Left ventricle myocardium inferior (tissue), 1 donor: ENCODE measurements at regions of chr6 and their contacts with region 1.

Region 1: GRCh38 chr6:141552473-141552878 is 580.2 kb upstream of the GJE1 start:
- DNase-seq: no peak
- H3K4me3 ChIP-seq: no peak overlapping the region
- H3K27ac ChIP-seq: peak overlapping the region; percentile 70
- H3K4me1 ChIP-seq: peaks cover 19% of the 10 kb centered on the region
- H3K27me3 ChIP-seq: no peaks in the 10 kb centered on the region
- CTCF ChIP-seq: no peak

Region 2: GRCh38 chr6:141421376-141421775 is 131.1 kb before region 1 on chr6:
- intact Hi-C with region 1: no loop called
- DNase-seq: no peak
- H3K4me3 ChIP-seq: no peak overlapping the region
- H3K27ac ChIP-seq: peak overlapping the region; percentile 41
- H3K4me1 ChIP-seq: peaks cover 4% of the 10 kb centered on the region
- H3K27me3 ChIP-seq: no peaks in the 10 kb centered on the region
- CTCF ChIP-seq: no peak

Region 3: DNA sequence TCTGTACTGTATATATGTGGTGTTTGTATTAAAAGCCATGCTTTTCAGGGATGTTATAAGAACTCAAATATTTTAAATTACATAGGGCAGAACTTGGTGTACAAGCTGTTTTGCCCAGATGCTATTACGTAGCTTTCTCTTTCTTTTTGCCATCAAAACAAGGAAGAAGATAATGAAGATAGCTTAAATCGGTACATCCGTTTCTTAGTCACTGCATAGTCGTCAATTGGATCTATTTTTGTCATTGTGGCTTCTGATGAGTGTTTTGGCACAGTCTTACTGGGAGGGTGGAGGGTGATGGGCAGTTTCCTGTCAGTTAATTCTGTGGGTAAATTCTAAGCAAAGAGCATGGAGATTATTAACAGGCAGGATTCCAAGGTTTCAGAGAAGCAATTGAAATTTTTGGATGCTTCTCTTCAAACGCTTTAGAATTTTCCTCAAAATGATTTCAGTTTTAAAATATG is 68.8 kb before region 1 on chr6:
- intact Hi-C with region 1: loop called (anchors 10 kb)
- DNase-seq: no peak
- H3K4me3 ChIP-seq: peak overlapping the region; percentile 49
- H3K27ac ChIP-seq: peak overlapping the region; percentile 71
- H3K4me1 ChIP-seq: peaks cover 24% of the 10 kb centered on the region
- H3K27me3 ChIP-seq: no peaks in the 10 kb centered on the region
- CTCF ChIP-seq: no peak